Activated CD4-positive, alpha-beta T cell treated with anti-CD3 and anti-CD28 coated beads, Interleukin-2, amount 10 ng/mL, durations not matched to agents 24 days and 14 days (primary cell): ENCODE measurements at regions of chr17 and their contacts with region 1.

Region 1: GRCh38 chr17:35486920-35487732 is 38.6 kb upstream of the SLFN13 start:
- DNase-seq: peak; percentile 91
- H3K4me3 Mint-ChIP-seq: peak overlapping the region; percentile 92
- H3K27ac Mint-ChIP-seq: peak overlapping the region; percentile 96
- H3K4me1 Mint-ChIP-seq: peaks cover 57% of the 10 kb centered on the region
- H3K27me3 Mint-ChIP-seq: no peaks in the 10 kb centered on the region

Region 2: GRCh38 chr17:35312790-35313711 is 174.1 kb before region 1 on chr17:
- intact Hi-C with region 1: loop called (anchors 1 kb)
- DNase-seq: peak; percentile 94
- H3K4me3 Mint-ChIP-seq: peak overlapping the region; percentile 85
- H3K27ac Mint-ChIP-seq: peak overlapping the region; percentile 88
- H3K4me1 Mint-ChIP-seq: peaks cover 34% of the 10 kb centered on the region
- H3K27me3 Mint-ChIP-seq: peaks cover 3% of the 10 kb centered on the region

Region 3: DNA sequence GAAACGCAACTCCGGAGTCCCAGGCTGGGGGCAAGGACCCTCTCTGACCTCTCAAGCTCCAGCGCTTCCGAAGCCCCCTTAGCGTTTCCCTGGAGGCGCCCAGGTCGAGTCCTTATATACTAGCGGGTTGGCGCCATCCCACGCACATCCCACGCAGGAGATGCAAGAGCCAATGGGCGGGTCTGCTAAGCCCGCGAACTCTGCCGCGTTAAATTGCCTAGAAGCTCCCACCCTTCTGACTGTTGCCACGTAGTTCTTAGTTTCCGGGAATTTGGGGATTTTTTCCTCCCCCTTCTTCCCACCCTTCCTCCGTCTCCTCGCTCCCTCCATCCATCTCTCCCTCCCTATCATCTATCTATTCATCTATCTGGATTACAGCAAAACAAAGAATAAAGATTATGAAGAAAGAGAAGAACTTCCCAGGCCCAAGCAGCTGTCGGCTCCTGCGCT is 113.6 kb before region 1 on chr17 and contains the start of gene SLFN11:
- intact Hi-C with region 1: loop called (anchors 1 kb)
- DNase-seq: peak; percentile 95
- H3K4me3 Mint-ChIP-seq: peak within 1 kb of the TSS; percentile 89
- H3K27ac Mint-ChIP-seq: peak within 1 kb of the TSS; percentile 93
- H3K4me1 Mint-ChIP-seq: peaks cover 51% of the 10 kb centered on the region
- H3K27me3 Mint-ChIP-seq: peaks cover 1% of the 10 kb centered on the region
- total RNA-seq, gene SLFN11: 72.3 and 73.6 TPM in 2 replicates

Region 4: GRCh38 chr17:35432176-35433074 is 54.7 kb before region 1 on chr17 and contains the start of gene SLFN12:
- intact Hi-C with region 1: loop called (anchors 2 kb)
- DNase-seq: peak; percentile 81
- H3K4me3 Mint-ChIP-seq: peak within 1 kb of the TSS; percentile 88
- H3K27ac Mint-ChIP-seq: peak within 1 kb of the TSS; percentile 92
- H3K4me1 Mint-ChIP-seq: peaks cover 51% of the 10 kb centered on the region
- H3K27me3 Mint-ChIP-seq: no peaks in the 10 kb centered on the region
- total RNA-seq, gene SLFN12: 5.0 and 7.8 TPM in 2 replicates

Region 5: DNA sequence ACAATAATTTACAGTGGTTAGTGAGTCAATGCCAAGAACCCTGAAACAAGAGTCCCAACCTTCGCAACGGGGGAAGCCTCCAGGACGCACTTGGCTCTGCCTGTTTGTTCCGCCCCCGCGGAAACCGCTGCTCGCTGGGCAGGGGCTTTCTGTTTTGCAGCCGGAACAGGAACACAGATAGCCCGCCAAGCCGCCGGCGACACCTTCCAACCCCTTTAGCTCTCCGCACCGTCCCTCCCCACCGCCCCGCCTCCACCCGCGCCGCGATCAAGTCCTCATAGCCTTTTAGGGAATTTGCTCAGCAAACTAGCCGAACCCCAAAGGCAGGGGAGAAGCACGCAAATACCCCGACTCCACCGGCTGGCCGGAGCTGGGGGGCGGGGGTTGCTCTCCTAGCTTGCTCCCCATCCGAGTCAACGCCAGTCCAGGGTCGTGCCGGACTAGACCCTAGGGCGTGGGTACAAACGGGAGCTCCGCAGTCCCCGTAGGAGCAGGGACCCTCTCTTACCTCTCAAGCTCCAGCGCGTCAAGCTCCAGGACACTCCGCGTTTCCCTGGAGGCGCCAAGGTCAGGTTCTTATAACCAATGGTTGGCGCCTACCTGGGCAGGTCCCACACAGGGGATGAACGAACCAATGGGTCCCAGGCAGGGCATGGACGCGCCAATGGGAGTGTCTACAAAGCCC is 38.8 kb before region 1 on chr17 and contains the start of gene SLFN13:
- intact Hi-C with region 1: loop called (anchors 1 kb)
- DNase-seq: peak; percentile 95
- H3K4me3 Mint-ChIP-seq: peak within 1 kb of the TSS; percentile 69
- H3K27ac Mint-ChIP-seq: peak within 1 kb of the TSS; percentile 77
- H3K4me1 Mint-ChIP-seq: peaks cover 13% of the 10 kb centered on the region
- H3K27me3 Mint-ChIP-seq: no peaks in the 10 kb centered on the region
- total RNA-seq, gene SLFN13: 34.5 and 36.8 TPM in 2 replicates

Region 6: GRCh38 chr17:35521150-35521549 is 34.0 kb after region 1 on chr17:
- intact Hi-C with region 1: loop called (anchors 2 kb)
- DNase-seq: no peak
- H3K4me3 Mint-ChIP-seq: peak overlapping the region; percentile 71
- H3K27ac Mint-ChIP-seq: peak overlapping the region; percentile 61
- H3K4me1 Mint-ChIP-seq: peaks cover 88% of the 10 kb centered on the region
- H3K27me3 Mint-ChIP-seq: no peaks in the 10 kb centered on the region